Cardiac septum (tissue), 1 donor: ENCODE measurements at regions of chr1 and their contacts with region 1.

Region 1: DNA sequence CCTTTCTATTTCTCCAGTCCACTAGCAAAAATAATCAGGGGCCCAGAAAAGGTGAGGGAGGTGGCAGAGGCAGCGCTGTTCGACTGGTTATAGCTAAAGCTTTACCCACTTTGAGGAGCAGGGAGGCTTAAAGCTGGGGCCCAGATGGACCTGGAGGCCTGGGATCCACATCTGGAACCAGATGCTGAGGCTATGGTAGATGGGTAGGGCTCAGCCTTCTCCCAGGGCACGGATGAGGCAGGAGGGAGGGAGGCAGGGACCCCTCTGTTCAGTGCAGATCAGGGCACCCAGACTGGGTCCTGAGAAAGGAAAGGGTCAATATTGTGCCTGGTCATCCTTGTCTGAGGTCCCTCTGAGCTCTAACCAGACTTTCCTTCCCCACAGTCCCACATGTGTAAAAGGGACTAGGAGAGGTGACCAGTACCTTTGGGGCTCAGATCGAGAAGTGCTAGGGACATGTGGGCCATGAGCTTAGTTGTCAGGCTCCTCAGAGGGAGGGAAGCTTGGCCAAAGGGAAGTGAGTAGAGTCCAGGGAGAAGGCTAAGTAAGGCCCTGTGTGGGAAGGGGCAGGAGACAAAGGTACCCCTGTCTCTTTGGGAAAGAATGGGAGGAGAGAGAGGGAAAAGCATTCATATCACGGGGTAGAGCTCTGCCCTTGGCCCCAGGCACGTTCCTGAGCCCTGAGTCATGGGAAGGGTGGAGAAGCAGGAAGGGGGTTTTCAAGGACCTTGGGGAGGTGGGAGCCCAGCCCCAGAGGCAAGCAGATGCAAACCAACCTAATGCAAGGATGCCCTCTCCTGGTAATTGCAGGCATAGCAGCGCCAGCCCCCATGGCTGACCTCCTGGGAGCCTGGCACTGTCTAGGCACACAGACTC is 15.4 kb downstream of the LMNA start:
- DNase-seq: peak; percentile 88

Region 2: DNA sequence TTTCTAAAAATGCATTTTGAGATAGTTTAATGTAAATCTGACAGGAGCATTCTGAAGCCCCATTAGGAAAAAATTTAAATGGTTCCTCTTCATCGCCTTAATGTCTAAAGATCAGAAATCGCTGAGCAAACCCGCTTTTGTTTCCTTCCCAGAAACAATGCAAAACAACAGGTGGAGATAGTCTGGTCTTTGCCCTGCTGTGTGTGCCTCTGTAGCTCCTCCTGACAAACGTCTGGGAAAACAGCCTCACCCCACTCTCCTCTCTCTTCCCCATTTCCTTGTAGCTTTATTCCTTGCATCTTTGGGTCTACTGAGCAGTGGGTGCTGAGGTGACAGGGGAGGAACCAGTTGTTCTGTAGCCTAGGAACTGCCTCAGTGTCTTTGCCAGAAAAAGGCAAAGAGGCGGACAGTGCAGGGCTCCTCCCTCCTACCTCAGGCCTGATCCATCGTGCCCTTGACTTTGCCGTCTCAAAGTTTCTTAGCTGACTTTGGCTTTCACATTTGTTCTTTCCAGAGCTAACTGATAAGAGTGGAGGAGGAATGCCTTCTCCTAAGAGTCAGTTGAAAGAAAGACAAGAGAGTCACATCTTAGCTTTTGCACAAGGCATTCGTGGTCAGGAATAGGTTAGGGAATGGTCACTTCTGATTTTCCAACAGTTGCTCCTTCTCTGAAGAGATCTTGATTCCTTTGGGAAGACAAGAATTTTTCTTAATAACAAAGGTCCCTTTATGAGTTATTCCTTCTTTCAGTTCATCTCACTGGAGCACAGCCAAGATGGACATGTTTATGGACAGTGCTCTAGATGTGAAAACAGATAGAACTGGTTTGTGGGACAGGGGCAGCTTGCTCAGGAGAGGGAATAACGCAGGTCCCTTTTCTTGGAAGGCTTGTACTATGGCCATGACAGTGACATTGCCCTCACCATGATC is 245.6 kb before region 1 on chr1:
- intact Hi-C with region 1: no loop called
- DNase-seq: no peak

Region 3: GRCh38 chr1:156082309-156083091 is 47.4 kb before region 1 on chr1 and contains the start of gene MEX3A:
- intact Hi-C with region 1: no loop called
- DNase-seq: peak; percentile 85
- total RNA-seq, gene MEX3A: 0.24 TPM

Region 4: DNA sequence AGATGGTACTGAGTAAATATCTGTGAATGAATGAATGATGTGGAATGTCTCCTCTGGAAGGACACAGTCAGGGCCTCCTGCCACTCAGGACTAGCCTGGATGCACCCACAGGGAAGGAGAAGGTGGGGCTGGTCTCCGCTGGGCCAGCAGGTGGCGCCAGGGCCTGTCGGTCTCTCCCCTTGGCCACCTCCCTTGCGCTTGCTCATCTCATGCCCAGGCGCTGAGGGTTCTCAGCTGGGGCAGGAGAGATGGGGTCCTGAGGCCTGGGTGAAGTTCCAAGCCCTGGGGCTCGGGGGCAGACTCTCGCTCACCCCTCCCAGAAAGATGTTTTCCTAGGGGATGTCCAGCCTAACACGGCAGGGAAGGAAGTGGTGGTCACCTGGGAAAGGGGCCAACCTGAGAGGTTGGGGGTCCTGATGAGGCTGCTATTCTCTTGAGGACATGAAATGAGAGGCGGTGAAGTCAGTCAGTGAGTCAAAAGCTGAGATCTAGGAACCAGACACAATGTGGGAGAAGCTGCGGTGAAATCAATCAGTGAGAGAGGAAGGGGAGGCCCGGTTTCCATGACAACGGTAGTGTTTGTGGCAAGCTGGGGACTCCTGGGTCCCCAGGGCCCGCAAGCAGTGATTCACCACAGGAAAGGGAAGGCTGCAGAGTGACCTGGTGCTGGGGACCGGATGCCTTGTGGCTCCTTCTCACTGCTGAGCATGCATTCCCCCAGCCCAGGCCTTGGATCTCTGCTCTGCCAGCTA is 33.1 kb before region 1 on chr1:
- intact Hi-C with region 1: loop called (anchors 1 kb)
- DNase-seq: peak; percentile 93

Region 5: DNA sequence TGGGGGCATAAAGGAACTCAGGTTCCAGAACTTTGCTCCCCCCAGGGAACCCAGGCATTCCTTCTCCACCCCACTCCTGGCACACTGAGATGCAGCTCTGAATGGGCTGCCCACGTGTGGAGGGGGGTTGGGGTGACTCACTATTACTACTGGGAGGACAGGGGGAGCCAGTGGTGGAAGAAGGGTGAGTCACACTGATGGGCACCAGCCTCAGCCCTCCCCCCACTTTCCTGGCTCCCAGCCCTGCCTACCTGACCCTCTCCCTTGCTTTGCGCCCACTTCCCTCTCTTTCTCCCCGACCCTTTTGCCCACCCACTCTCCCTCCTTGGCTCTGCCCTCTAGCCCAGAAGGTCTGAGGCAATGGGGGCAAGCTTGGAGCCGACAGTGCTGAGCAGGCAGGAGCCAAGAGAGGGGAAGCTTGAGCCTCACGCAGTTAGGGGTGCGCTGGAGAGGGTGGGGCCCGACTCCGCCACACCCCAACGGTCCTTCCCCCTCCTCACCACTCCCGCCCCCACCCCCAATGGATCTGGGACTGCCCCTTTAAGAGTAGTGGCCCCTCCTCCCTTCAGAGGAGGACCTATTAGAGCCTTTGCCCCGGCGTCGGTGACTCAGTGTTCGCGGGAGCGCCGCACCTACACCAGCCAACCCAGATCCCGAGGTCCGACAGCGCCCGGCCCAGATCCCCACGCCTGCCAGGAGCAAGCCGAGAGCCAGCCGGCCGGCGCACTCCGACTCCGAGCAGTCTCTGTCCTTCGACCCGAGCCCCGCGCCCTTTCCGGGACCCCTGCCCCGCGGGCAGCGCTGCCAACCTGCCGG is 15.6 kb before region 1 on chr1 and contains the start of gene LMNA:
- intact Hi-C with region 1: loop called (anchors 2 kb)
- DNase-seq: peak; percentile 95
- total RNA-seq, gene LMNA: 298 TPM

Region 6: GRCh38 chr1:156319664-156320063 is 189.7 kb after region 1 on chr1:
- intact Hi-C with region 1: loop called (anchors 10 kb)
- DNase-seq: no peak